Dendritic cell treated with granulocyte-macrophage colony-stimulating factor and Interleukin-4, amounts not matched to agents 40 ng/mL and 50 ng/mL, for 4 days (primary cell): ENCODE measurements at regions of chr12 and their contacts with region 1.

Region 1: GRCh38 chr12:89051065-89051677 is 301.1 kb downstream of the DUSP6 start:
- H3K4me3 Mint-ChIP-seq: no peak overlapping the region
- H3K27ac Mint-ChIP-seq: no peak overlapping the region
- H3K4me1 Mint-ChIP-seq: peaks cover 14% of the 10 kb centered on the region
- H3K27me3 Mint-ChIP-seq: no peaks in the 10 kb centered on the region

Region 2: DNA sequence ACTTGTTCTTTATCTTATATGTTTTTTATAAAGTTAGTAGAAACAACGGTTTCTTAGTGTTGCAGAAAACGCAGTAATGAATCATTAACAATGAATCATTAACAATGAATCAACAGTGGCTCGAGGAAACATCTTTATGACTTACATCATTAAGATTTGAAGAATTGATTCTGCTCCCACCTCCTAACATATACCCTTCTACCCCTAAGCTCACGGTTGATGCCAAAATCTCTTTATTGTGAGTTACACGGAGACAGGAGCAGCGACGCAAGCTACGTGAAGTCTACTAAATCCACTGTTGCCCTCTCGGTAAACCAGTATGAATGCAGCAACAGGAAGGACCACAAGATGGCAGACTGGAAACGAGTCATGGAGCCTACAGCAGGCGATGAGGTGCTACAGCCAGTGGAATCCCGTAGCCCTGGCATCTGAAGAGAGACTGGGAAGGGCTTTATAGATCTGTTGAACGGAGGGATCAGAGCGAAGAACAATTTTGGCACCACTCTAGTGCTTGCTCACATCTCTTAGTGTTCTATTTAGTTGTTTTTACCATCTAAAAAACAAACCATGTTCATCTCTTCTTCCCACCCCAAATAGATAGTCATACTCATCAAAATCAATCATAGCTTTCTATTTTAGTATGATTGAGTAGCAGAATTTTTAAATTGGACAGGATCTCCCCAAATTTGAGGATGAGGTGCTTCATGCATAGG is 31.6 kb before region 1 on chr12:
- intact Hi-C with region 1: loop called (anchors 5 kb)
- H3K4me3 Mint-ChIP-seq: no peak overlapping the region
- H3K27ac Mint-ChIP-seq: no peak overlapping the region
- H3K4me1 Mint-ChIP-seq: no peaks in the 10 kb centered on the region
- H3K27me3 Mint-ChIP-seq: peaks cover 2% of the 10 kb centered on the region

Region 3: DNA sequence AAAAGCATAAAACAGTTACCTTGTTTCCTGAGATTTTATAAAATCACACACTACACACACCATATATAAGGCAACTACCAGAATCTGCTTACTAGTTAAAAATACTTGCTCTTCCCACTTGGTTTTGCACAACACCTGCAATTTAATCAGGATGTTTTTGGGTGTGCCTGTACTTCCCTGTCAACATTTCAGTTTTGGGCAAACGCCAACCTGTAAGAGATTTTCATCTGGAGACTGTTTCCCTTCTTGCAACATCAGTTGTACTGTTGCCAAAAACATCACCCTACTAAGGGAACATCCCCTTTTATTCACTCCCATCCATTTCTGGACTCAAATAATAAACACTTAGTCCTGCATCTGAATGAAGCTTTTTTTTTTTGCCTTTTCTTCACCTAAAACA is 128.8 kb after region 1 on chr12:
- intact Hi-C with region 1: loop called (anchors 10 kb)
- H3K4me3 Mint-ChIP-seq: no peak overlapping the region
- H3K27ac Mint-ChIP-seq: peak overlapping the region; percentile 28
- H3K4me1 Mint-ChIP-seq: peaks cover 33% of the 10 kb centered on the region
- H3K27me3 Mint-ChIP-seq: no peaks in the 10 kb centered on the region

Region 4: GRCh38 chr12:89352492-89353187 is 301.5 kb after region 1 on chr12 and contains the start of gene DUSP6:
- intact Hi-C with region 1: loop called (anchors 5 kb)
- H3K4me3 Mint-ChIP-seq: peak within 1 kb of the TSS; percentile 92
- H3K27ac Mint-ChIP-seq: peak within 1 kb of the TSS; percentile 91
- H3K4me1 Mint-ChIP-seq: peaks cover 55% of the 10 kb centered on the region
- H3K27me3 Mint-ChIP-seq: no peaks in the 10 kb centered on the region

Region 5: GRCh38 chr12:89461649-89462612 is 410.8 kb after region 1 on chr12:
- intact Hi-C with region 1: loop called (anchors 1 kb)
- H3K4me3 Mint-ChIP-seq: no peak overlapping the region
- H3K27ac Mint-ChIP-seq: no peak overlapping the region
- H3K4me1 Mint-ChIP-seq: peaks cover 7% of the 10 kb centered on the region
- H3K27me3 Mint-ChIP-seq: no peaks in the 10 kb centered on the region